Left lung (tissue), 14 donors: ENCODE measurements at regions of chr3 and their contacts with region 1.

Region 1: DNA sequence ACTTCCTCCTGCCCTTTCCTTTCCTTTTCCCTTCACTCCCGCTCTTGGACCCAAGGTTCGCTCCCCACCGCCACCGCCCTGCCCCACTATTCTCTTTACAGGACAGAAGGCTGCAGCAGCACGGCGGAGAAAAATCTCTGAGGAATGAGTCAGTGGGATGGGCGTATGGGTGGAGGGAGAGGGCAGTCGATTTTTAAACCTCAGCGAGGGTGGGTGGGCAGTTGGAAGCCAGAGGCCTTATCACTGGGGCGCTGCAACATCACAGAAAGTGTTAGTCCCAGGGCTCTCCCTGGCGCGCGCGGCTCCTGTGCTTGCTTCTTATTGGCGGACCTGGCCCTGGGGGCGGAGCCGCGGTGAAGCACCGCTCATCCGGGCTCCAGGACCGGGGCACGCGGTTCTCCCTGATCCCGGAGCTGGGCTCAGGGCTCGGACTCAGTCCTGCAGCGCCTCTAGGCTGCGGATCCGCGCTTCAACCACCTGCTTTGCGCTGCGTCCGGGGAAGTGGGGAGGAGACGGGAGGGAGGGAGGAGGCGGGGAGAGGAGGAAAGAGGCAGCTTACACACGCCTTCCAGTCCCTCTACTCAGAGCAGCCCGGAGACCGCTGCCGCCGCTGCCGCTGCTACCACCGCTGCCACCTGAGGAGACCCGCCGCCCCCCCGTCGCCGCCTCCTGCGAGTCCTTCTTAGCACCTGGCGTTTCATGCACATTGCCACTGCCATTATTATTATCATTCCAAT is at the start of gene ALCAM:
- DNase-seq: peak; percentile 89 to 99 (median 97)
- ATAC-seq: peak; percentile 85
- H3K4me3 ChIP-seq: peak within 1 kb of the TSS; percentile 64 to 68
- H3K27ac ChIP-seq: peak within 1 kb of the TSS; percentile 90 to 92
- H3K4me1 ChIP-seq: peaks cover 0 to 42% of the 10 kb centered on the region in 2 donors
- H3K27me3 ChIP-seq: peaks cover 0 to 20% of the 10 kb centered on the region in 2 donors
- CTCF ChIP-seq: peak; percentile 16 to 35
- polyA plus RNA-seq, gene ALCAM: 84.2 to 137 (median 121) TPM

Region 2: DNA sequence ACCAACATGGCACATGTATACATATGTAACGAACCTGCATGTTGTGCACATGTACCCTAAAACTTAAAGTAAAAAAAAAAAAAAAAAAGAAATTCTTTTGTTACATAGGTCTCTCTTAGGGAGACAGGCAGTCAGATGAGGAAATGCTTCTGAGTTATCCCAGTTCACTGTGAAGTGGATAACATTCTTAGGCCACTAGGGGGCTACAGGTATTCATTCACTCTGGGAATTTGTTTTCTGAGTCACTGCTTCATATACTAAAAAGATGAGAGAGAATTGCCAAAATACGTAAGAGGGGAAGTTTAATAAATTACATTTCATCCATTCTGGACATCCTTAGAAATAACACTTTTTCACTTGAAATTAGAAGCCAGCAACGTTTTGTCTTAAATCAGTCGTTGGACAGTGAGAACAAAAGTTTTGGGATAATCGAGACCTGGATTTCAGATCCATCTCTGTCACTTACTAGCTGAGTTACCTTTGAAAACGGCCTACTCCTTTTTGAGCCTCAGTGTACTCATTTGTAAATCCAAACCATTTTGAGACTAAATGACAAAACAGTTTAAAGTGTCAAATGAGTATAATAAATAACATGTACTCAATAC is 738.2 kb before region 1 on chr3:
- intact Hi-C with region 1: loop called in 1 of 2 experiments (anchors 5 kb)
- DNase-seq: peak in 1 of 4 donors; percentile 24
- ATAC-seq: peak; percentile 91
- H3K4me3 ChIP-seq: no peak overlapping the region
- H3K27ac ChIP-seq: no peak overlapping the region
- H3K4me1 ChIP-seq: no peaks in the 10 kb centered on the region
- H3K27me3 ChIP-seq: no peaks in the 10 kb centered on the region
- CTCF ChIP-seq: peak; percentile 50 to 64